Activated CD4-positive, alpha-beta memory T cell treated with anti-CD3 and anti-CD28 coated beads for 36 hours (primary cell): ENCODE measurements at regions of chr12 and their contacts with region 1.

Region 1: GRCh38 chr12:83140135-83140534 is 453.4 kb downstream of the TMTC2 start:
- DNase-seq: no peak
- H3K4me3 Mint-ChIP-seq: no peak overlapping the region
- H3K27ac Mint-ChIP-seq: no peak overlapping the region
- H3K4me1 Mint-ChIP-seq: peaks cover 7% of the 10 kb centered on the region
- H3K27me3 Mint-ChIP-seq: no peaks in the 10 kb centered on the region

Region 2: GRCh38 chr12:83016218-83016835 is 123.8 kb before region 1 on chr12:
- CTCF ChIA-PET with region 1: no interaction called
- POLR2A ChIA-PET with region 1: no interaction called
- intact Hi-C with region 1: loop called (anchors 5 kb)
- DNase-seq: no peak
- H3K4me3 Mint-ChIP-seq: no peak overlapping the region
- H3K27ac Mint-ChIP-seq: no peak overlapping the region
- H3K4me1 Mint-ChIP-seq: peaks cover 10% of the 10 kb centered on the region
- H3K27me3 Mint-ChIP-seq: no peaks in the 10 kb centered on the region

Region 3: GRCh38 chr12:83121897-83122622 is 18.1 kb before region 1 on chr12:
- CTCF ChIA-PET with region 1: no interaction called
- POLR2A ChIA-PET with region 1: no interaction called
- intact Hi-C with region 1: loop called (anchors 1 kb)
- DNase-seq: no peak
- H3K4me3 Mint-ChIP-seq: no peak overlapping the region
- H3K27ac Mint-ChIP-seq: no peak overlapping the region
- H3K4me1 Mint-ChIP-seq: peaks cover 10% of the 10 kb centered on the region
- H3K27me3 Mint-ChIP-seq: no peaks in the 10 kb centered on the region

Region 4: DNA sequence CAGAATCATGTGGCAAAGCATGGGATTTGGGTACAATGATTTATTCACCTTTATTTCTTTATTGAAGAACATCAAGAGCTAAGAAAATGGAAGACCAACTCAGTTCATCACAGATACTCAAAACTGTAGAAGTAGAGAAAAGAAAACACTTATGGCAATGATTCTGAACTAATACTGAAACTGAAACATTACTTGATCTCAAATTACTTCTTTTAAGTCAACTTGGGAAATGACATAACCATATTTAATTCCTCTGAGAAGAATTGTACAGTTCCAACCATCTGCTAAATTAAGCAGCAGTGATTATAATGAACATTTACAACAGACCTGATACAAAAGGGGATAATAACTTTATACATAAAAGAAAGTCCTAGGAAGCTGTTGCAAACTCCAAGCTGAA is 13.0 kb after region 1 on chr12:
- CTCF ChIA-PET with region 1: no interaction called
- POLR2A ChIA-PET with region 1: no interaction called
- intact Hi-C with region 1: loop called (anchors 1 kb)
- DNase-seq: no peak
- H3K4me3 Mint-ChIP-seq: no peak overlapping the region
- H3K27ac Mint-ChIP-seq: no peak overlapping the region
- H3K4me1 Mint-ChIP-seq: peaks cover 6% of the 10 kb centered on the region
- H3K27me3 Mint-ChIP-seq: peaks cover 3% of the 10 kb centered on the region